Right cardiac atrium (tissue), 5 donors: ENCODE measurements at regions of chr20 and their contacts with region 1.

Region 1: GRCh38 chr20:31723319-31724078 is 831 bp upstream of the BCL2L1 start:
- DNase-seq: peak; percentile 99 to 100 (median 99)
- ATAC-seq: peak; percentile 97
- H3K4me3 ChIP-seq: peak overlapping the region; percentile 98
- H3K27ac ChIP-seq: peak overlapping the region; percentile 97
- H3K4me1 ChIP-seq: peaks cover 10% of the 10 kb centered on the region
- H3K27me3 ChIP-seq: no peaks in the 10 kb centered on the region

Region 2: GRCh38 chr20:31560094-31560899 is 163.2 kb before region 1 on chr20:
- intact Hi-C with region 1: loop called in 2 of 4 experiments (anchors 10 kb)
- DNase-seq: peak; percentile 76 to 87 (median 86)
- ATAC-seq: peak; percentile 17 to 47
- H3K4me3 ChIP-seq: no peak overlapping the region
- H3K27ac ChIP-seq: peak overlapping the region; percentile 45
- H3K4me1 ChIP-seq: peaks cover 3% of the 10 kb centered on the region
- H3K27me3 ChIP-seq: no peaks in the 10 kb centered on the region

Region 3: GRCh38 chr20:31661625-31662371 is 61.7 kb before region 1 on chr20:
- intact Hi-C with region 1: loop called (anchors 1 to 5 kb)
- DNase-seq: peak; percentile 84 to 94 (median 93)
- ATAC-seq: peak; percentile 88
- H3K4me3 ChIP-seq: peak overlapping the region; percentile 37
- H3K27ac ChIP-seq: peak overlapping the region; percentile 69
- H3K4me1 ChIP-seq: peaks cover 6% of the 10 kb centered on the region
- H3K27me3 ChIP-seq: no peaks in the 10 kb centered on the region